ENCODE measurements at regions of chr16 and their contacts with region 1.

Region 1: GRCh38 chr16:3065069-3065741 is at the start of gene IL32:
- DNase-seq: peak; percentile 64 to 85 (median 66)
- H3K4me3 ChIP-seq: peak within 1 kb of the TSS; percentile 98
- H3K4me3 Mint-ChIP-seq: peak within 1 kb of the TSS; percentile 98 to 100 (median 100)
- H3K27ac ChIP-seq: peak within 1 kb of the TSS; percentile 98
- H3K27ac Mint-ChIP-seq: peak within 1 kb of the TSS; percentile 91 to 99 (median 96)
- H3K4me1 ChIP-seq: peaks cover 72% of the 10 kb centered on the region
- H3K4me1 Mint-ChIP-seq: peaks cover 34 to 84% (median 55%) of the 10 kb centered on the region in 4 donors
- H3K27me3 ChIP-seq: no peaks in the 10 kb centered on the region
- H3K27me3 Mint-ChIP-seq: no peaks in the 10 kb centered on the region
- total RNA-seq, gene IL32: 752 to 810 TPM

Region 2: GRCh38 chr16:2952679-2953078 is 112.5 kb before region 1 on chr16:
- CTCF ChIA-PET with region 1: no interaction called
- POLR2A ChIA-PET with region 1: no interaction called
- intact Hi-C with region 1: no loop called
- DNase-seq: peak in 1 of 5 donors; percentile 27
- H3K4me3 ChIP-seq: no peak overlapping the region
- H3K4me3 Mint-ChIP-seq: peak overlapping the region in 1 of 8 donors; percentile 8
- H3K27ac ChIP-seq: no peak overlapping the region
- H3K27ac Mint-ChIP-seq: no peak overlapping the region
- H3K4me1 ChIP-seq: no peaks in the 10 kb centered on the region
- H3K4me1 Mint-ChIP-seq: peaks cover 0 to 3% (median 0%) of the 10 kb centered on the region in 4 donors
- H3K27me3 ChIP-seq: no peaks in the 10 kb centered on the region
- H3K27me3 Mint-ChIP-seq: peaks cover 4 to 9% of the 10 kb centered on the region in 2 donors

Region 3: GRCh38 chr16:3045357-3045728 is 19.9 kb before region 1 on chr16:
- CTCF ChIA-PET with region 1: interaction called, 3 read pairs
- POLR2A ChIA-PET with region 1: interaction called, 15 read pairs
- intact Hi-C with region 1: no loop called
- DNase-seq: peak in 2 of 5 donors; percentile 48 to 49
- H3K4me3 ChIP-seq: peak overlapping the region in 1 of 2 donors; percentile 18
- H3K4me3 Mint-ChIP-seq: peak overlapping the region; percentile 72 to 90 (median 83)
- H3K27ac ChIP-seq: no peak overlapping the region
- H3K27ac Mint-ChIP-seq: peak overlapping the region in 2 of 7 donors; percentile 12 to 55
- H3K4me1 ChIP-seq: peaks cover 22% of the 10 kb centered on the region
- H3K4me1 Mint-ChIP-seq: peaks cover 10 to 27% (median 12%) of the 10 kb centered on the region in 4 donors
- H3K27me3 ChIP-seq: peaks cover 33% of the 10 kb centered on the region
- H3K27me3 Mint-ChIP-seq: peaks cover 14 to 18% of the 10 kb centered on the region in 2 donors

Region 4: GRCh38 chr16:3094289-3095027 is 29.3 kb after region 1 on chr16:
- CTCF ChIA-PET with region 1: interaction called, 249 read pairs
- POLR2A ChIA-PET with region 1: interaction called, 22 read pairs
- intact Hi-C with region 1: no loop called
- DNase-seq: peak; percentile 58 to 76 (median 66)
- H3K4me3 ChIP-seq: no peak overlapping the region
- H3K4me3 Mint-ChIP-seq: peak overlapping the region in 5 of 8 donors; percentile 3 to 77 (median 22)
- H3K27ac ChIP-seq: no peak overlapping the region
- H3K27ac Mint-ChIP-seq: peak overlapping the region; percentile 17 to 95 (median 78)
- H3K4me1 ChIP-seq: peaks cover 45% of the 10 kb centered on the region
- H3K4me1 Mint-ChIP-seq: peaks cover 9 to 56% (median 32%) of the 10 kb centered on the region in 4 donors
- H3K27me3 ChIP-seq: no peaks in the 10 kb centered on the region
- H3K27me3 Mint-ChIP-seq: no peaks in the 10 kb centered on the region

Region 5: GRCh38 chr16:3099732-3100499 is 34.7 kb after region 1 on chr16:
- CTCF ChIA-PET with region 1: interaction called, 249 read pairs
- POLR2A ChIA-PET with region 1: interaction called, 22 read pairs
- intact Hi-C with region 1: no loop called
- DNase-seq: peak; percentile 80 to 89 (median 82)
- H3K4me3 ChIP-seq: peak overlapping the region; percentile 19 to 23
- H3K4me3 Mint-ChIP-seq: peak overlapping the region; percentile 77 to 90 (median 86)
- H3K27ac ChIP-seq: peak overlapping the region; percentile 33
- H3K27ac Mint-ChIP-seq: peak overlapping the region; percentile 82 to 97 (median 93)
- H3K4me1 ChIP-seq: peaks cover 58% of the 10 kb centered on the region
- H3K4me1 Mint-ChIP-seq: peaks cover 19 to 68% (median 44%) of the 10 kb centered on the region in 4 donors
- H3K27me3 ChIP-seq: no peaks in the 10 kb centered on the region
- H3K27me3 Mint-ChIP-seq: no peaks in the 10 kb centered on the region

Region 6: GRCh38 chr16:3106205-3106928 is 41.2 kb after region 1 on chr16:
- CTCF ChIA-PET with region 1: interaction called, 249 read pairs
- POLR2A ChIA-PET with region 1: interaction called, 17 read pairs
- intact Hi-C with region 1: no loop called
- DNase-seq: peak; percentile 87 to 90 (median 88)
- H3K4me3 ChIP-seq: peak overlapping the region; percentile 38 to 58
- H3K4me3 Mint-ChIP-seq: peak overlapping the region; percentile 78 to 92 (median 88)
- H3K27ac ChIP-seq: peak overlapping the region; percentile 82
- H3K27ac Mint-ChIP-seq: peak overlapping the region; percentile 86 to 95 (median 92)
- H3K4me1 ChIP-seq: peaks cover 37% of the 10 kb centered on the region
- H3K4me1 Mint-ChIP-seq: peaks cover 12 to 41% (median 27%) of the 10 kb centered on the region in 4 donors
- H3K27me3 ChIP-seq: no peaks in the 10 kb centered on the region
- H3K27me3 Mint-ChIP-seq: no peaks in the 10 kb centered on the region

Region 7: DNA sequence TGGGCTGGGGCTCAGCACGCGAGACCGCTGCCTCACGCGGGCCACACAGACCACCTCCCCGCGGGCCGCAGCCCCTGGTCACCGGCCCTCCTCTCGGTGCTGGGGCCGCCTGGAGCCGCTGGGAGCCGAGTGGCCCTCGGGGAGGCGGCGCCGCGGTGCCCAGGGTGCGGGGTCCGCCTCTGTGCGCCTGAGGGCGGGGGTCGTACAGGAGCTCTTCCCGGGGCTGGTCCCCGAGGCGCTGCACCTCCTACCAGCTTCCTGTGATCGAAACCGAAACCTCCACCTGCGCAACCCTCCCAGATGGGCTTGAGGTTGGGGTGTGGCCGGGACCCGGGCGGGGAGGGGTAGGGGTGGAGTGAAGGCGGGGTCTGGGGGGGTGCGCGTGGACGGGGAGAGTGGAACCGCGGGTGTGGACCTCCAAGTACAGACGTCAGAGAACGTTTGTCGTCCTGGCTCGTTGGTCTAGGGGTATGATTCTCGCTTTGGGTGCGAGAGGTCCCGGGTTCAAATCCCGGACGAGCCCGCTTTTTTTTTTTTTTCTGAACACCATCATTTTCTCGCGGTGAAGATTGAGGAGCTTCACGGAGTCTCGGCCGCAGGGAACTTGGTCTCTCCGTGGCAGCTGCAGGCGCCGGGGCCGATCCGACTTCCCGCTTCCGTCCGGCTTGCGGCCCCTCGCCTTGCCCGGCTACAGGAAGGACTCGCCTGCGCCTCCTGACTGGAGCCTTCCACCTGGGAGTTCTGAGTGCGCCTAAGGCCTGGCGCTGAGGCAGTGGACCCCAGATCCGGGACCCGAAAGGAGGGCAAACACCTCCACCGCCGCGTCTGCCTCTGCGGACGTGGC is 93.5 kb after region 1 on chr16:
- CTCF ChIA-PET with region 1: interaction called, 4 read pairs
- POLR2A ChIA-PET with region 1: interaction called, 18 read pairs
- intact Hi-C with region 1: no loop called
- DNase-seq: peak; percentile 92 to 98 (median 94)
- H3K4me3 ChIP-seq: peak overlapping the region; percentile 65 to 66
- H3K4me3 Mint-ChIP-seq: peak overlapping the region; percentile 83 to 96 (median 92)
- H3K27ac ChIP-seq: peak overlapping the region; percentile 62
- H3K27ac Mint-ChIP-seq: peak overlapping the region; percentile 92 to 100 (median 96)
- H3K4me1 ChIP-seq: peaks cover 25% of the 10 kb centered on the region
- H3K4me1 Mint-ChIP-seq: peaks cover 11 to 36% (median 25%) of the 10 kb centered on the region in 4 donors
- H3K27me3 ChIP-seq: no peaks in the 10 kb centered on the region
- H3K27me3 Mint-ChIP-seq: peaks cover 0 to 2% of the 10 kb centered on the region in 2 donors